ENCODE measurements at regions of chr15 and their contacts with region 1.

Region 1: DNA sequence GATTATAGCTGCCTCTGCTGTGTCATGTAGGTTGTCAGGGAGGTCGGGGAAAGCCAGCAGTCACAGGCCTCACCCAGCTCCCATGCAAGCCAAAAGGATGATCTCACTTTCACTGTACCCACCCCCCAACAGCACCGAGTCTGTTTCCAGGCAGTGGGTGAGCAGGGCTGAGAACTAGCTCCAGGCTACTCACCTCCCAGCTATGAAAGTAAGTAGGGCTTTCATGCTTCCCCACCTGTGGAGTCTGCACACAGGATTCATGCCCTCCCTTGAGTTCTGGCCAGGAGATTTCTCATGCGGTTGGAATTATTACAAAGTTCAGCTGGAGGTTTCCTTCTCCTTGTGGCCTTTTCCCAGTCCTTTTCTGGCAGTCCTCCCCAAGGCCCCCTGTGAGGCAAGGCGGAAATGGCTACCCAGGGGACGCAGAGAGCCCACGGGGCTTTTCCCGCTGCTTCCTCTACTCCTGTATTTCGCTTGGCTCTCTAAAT is 356.2 kb downstream of the SV2B start:
- DNase-seq: peak; percentile 91 to 98
- H3K4me3 ChIP-seq: peak overlapping the region; percentile 39; the same call in 1 of the 2 replicates
- H3K27ac ChIP-seq: peak overlapping the region; percentile 99
- H3K4me1 ChIP-seq: peaks cover 31% of the 10 kb centered on the region
- H3K27me3 ChIP-seq: no peaks in the 10 kb centered on the region
- CTCF ChIP-seq: no peak

Region 2: DNA sequence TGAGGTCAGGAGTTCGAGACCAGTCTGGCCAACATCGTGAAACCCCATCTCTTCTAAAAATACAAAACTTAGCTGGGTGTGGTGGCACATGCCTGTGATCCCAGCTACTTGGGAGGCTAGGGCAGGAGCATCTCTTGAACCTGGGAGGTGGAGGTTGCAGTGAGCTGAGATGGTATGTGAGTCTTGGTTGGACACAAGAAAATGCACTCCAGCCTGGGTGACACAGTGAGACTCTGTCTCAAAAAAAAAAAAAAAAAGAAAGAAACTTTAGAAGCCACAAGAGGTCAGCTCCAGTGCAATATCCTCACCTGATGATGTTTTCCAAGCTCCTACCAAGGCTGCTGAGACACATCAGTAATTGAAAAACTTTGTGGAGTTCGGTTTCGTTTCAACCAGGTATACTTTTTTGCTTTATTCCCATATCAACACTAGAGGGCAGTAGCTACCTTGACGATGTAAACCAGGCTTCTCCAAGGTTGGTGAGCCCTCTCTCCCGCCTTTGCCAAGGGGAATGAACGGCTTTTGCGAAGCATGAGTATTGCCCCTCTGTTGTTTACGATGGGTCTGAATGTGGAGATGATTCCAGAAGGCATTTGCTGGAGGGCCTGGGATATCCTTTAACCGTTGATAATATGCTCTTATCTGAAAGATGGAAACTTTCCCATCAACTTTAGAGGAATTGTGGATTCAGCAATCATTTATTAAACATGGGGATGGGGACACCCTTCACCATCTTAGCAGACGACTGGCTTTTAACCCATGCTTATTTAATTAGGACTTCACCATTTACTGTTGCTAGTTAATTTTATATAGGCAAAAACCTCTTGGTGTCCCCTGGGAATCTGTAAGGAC is 153.5 kb before region 1 on chr15:
- CTCF ChIA-PET with region 1: no interaction called
- POLR2A ChIA-PET with region 1: no interaction called
- intact Hi-C with region 1: loop called (anchors 1 kb)
- DNase-seq: peak; percentile 29 to 61
- H3K4me3 ChIP-seq: no peak overlapping the region
- H3K27ac ChIP-seq: no peak overlapping the region
- H3K4me1 ChIP-seq: 0 out of 2 replicates have a peak, but pooled peaks cover 4% of the 10 kb centered on the region
- H3K27me3 ChIP-seq: no peaks in the 10 kb centered on the region
- CTCF ChIP-seq: peak; percentile 86

Region 3: GRCh38 chr15:91435113-91435512 is 21.2 kb before region 1 on chr15:
- CTCF ChIA-PET with region 1: no interaction called
- POLR2A ChIA-PET with region 1: interaction called, 12 read pairs
- intact Hi-C with region 1: no loop called
- DNase-seq: no peak
- H3K4me3 ChIP-seq: no peak overlapping the region
- H3K27ac ChIP-seq: no peak overlapping the region
- H3K4me1 ChIP-seq: no peaks in the 10 kb centered on the region
- H3K27me3 ChIP-seq: no peaks in the 10 kb centered on the region
- CTCF ChIP-seq: no peak

Region 4: GRCh38 chr15:91535856-91536500 is 79.7 kb after region 1 on chr15:
- CTCF ChIA-PET with region 1: no interaction called
- POLR2A ChIA-PET with region 1: interaction called, 6 read pairs
- intact Hi-C with region 1: loop called (anchors 1 kb)
- DNase-seq: no peak
- H3K4me3 ChIP-seq: no peak overlapping the region
- H3K27ac ChIP-seq: peak overlapping the region; percentile 93
- H3K4me1 ChIP-seq: peaks cover 38% of the 10 kb centered on the region
- H3K27me3 ChIP-seq: no peaks in the 10 kb centered on the region
- CTCF ChIP-seq: no peak

Region 5: DNA sequence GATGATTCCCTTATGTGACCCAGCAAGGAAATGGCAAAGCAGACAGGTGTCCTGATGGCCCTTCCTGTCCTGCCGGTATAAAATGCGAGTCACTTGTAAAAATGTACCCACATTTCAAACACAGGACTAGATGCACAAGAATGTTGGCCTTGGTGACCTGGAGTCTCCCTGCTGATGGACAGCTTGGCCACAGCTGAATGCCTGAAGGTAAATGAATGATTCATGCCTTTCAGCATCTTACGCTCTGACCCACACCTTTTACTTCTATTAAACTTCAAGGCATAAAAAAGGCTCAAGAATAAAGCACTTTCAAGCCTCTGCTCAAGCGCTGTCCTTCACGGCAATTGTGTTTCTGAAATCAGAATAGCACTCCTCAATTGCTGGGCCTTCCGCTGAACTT is 169.2 kb after region 1 on chr15:
- CTCF ChIA-PET with region 1: no interaction called
- POLR2A ChIA-PET with region 1: no interaction called
- intact Hi-C with region 1: loop called (anchors 1 kb)
- DNase-seq: peak; percentile 60 to 94
- H3K4me3 ChIP-seq: peak overlapping the region; percentile 12; the same call in 1 of the 2 replicates
- H3K27ac ChIP-seq: peak overlapping the region; percentile 43
- H3K4me1 ChIP-seq: peaks cover 36% of the 10 kb centered on the region
- H3K27me3 ChIP-seq: no peaks in the 10 kb centered on the region
- CTCF ChIP-seq: no peak

Region 6: DNA sequence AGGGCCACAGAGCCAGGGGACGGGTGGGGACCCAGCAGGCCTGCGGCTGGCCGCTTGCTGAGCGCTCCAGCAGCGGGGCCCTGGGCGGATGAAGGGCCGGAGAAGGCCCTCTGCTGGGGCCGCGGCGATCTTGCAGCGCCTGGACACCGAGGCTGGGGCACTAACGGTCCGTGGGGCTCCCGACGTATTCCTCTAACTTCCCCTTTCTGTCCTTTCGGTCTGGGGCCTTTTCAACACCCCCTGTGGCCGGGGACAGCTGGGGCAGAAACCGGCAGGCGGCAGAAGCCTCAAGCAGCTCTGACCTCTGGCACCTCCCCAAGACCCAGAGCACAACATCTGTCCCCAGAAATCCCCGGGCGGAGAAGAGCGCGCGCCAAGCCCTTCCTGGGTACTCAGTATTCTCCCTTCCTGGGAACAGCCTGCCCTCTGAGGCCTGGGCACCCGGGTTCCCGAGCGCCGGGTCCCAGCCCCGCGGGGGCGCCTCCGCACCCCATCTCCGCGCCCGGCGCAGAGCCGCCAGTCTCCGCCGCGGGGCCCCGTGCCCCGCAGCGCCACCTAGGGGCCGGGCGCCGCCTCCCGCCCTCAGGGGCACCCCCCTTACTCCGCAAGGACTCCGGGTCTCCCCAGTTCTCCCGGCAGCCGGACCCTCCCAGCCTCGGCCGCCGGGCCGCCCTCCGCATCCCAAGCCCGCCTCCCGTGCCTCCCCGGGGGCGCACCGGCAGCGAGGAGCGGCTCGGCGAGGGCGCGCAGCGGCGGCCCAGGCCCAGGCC is 396.6 kb after region 1 on chr15:
- CTCF ChIA-PET with region 1: no interaction called
- POLR2A ChIA-PET with region 1: no interaction called
- intact Hi-C with region 1: loop called (anchors 1 kb)
- DNase-seq: peak; percentile 46 to 74
- H3K4me3 ChIP-seq: peak overlapping the region; percentile 86
- H3K27ac ChIP-seq: peak overlapping the region; percentile 74
- H3K4me1 ChIP-seq: peaks cover 44% of the 10 kb centered on the region
- H3K27me3 ChIP-seq: no peaks in the 10 kb centered on the region
- CTCF ChIP-seq: peak; percentile 72

Region 7: DNA sequence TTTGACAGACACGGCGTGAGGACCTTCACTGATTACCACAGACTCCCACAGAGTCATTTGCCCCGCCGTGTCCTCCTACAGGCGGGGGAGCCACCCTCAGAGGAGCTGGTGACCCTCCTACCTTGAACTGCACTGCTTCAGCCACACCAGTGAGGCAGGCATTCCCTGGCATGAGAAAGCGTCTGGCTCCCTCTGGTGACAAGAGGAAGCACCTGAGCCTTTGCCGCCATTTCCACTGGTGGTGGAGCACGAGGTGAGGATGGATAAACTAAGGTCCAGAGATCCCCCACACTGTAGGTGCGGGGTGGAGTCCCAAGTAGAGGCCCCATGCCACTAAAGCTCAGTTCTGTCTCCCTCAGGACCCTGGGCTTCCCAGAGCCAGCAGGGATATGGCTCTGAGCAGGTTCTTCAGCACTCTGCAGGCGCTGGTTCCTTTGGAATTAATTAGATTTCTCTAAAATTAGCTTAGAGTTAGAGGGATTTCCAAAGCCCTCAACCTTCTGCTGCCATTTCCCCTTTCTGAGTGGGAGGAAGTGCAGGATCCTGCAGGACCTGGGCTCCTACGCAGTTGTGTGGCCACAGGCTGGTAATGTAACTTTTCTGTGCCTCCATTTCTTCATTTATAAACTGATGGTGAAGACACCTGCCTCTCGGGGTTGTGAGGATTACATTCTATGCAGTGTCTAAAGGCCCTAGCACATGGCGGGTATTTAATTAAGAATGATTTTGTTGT is 621.2 kb after region 1 on chr15:
- CTCF ChIA-PET with region 1: no interaction called
- POLR2A ChIA-PET with region 1: no interaction called
- intact Hi-C with region 1: loop called (anchors 5 kb)
- DNase-seq: peak; percentile 47 to 63
- H3K4me3 ChIP-seq: no peak overlapping the region
- H3K27ac ChIP-seq: no peak overlapping the region
- H3K4me1 ChIP-seq: peaks cover 7% of the 10 kb centered on the region
- H3K27me3 ChIP-seq: no peaks in the 10 kb centered on the region
- CTCF ChIP-seq: peak; percentile 76